ENCODE measurements at regions of chr12 and their contacts with region 1.

Region 1: GRCh38 chr12:6890789-6891645 is 13.6 kb upstream of the LRRC23 start:
- DNase-seq: peak; percentile 88
- ATAC-seq: peak; percentile 96
- H3K4me3 ChIP-seq: peak overlapping the region; percentile 50 to 79 (median 65)
- H3K27ac ChIP-seq: peak overlapping the region; percentile 94
- H3K4me1 ChIP-seq: peaks cover 52% of the 10 kb centered on the region
- H3K27me3 ChIP-seq: no peaks in the 10 kb centered on the region; a peak in 1 of 5 replicates
- CTCF ChIP-seq: peak; percentile 87
- EP300 ChIP-seq: peak in 1 of 2 experiments; percentile 56; a peak in 3 of 4 replicates
- POLR2A ChIP-seq: peak; percentile 73 to 78
- RAD21 ChIP-seq: peak; percentile 99

Region 2: DNA sequence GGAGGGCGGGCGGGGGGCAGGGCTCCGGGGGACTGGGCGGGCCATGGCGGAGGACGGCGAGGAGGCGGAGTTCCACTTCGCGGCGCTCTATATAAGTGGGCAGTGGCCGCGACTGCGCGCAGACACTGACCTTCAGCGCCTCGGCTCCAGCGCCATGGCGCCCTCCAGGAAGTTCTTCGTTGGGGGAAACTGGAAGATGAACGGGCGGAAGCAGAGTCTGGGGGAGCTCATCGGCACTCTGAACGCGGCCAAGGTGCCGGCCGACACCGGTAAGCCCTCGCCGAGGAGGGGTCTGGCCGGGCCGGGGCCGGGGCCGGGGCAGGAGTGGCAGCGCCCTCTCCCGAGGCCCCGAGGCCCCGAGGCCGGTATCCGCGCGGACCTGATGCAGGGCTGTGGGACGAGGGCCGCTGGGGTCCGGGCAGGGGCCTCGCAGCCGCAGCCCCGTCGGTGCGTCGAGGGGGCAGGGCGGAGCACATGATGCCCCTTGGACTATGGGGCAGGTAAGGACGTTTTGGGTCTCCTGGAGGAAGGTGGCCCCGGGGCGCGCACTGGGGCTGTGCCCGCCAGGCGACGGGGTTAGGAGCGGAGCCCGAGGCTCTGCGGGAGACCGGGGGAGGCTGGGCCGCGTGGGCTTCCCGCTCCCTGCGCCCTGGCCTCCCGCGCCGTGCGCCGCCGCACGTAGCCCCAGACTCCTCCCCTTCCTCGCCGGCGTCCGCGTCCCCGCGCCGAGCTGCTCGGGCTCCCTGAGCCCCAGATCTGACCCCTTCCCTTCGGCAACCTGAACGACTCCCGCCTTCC is 23.4 kb before region 1 on chr12 and contains the start of gene TPI1:
- CTCF ChIA-PET with region 1: interaction called, 24 read pairs
- POLR2A ChIA-PET with region 1: interaction called, 73 read pairs
- in situ Hi-C with region 1: no loop called
- intact Hi-C with region 1: loop called (anchors 1 kb)
- DNase-seq: peak; percentile 39
- ATAC-seq: peak; percentile 73
- H3K4me3 ChIP-seq: peak within 1 kb of the TSS; percentile 88 to 96 (median 92)
- H3K27ac ChIP-seq: peak within 1 kb of the TSS; percentile 87
- H3K4me1 ChIP-seq: peaks cover 45% of the 10 kb centered on the region
- H3K27me3 ChIP-seq: no peaks in the 10 kb centered on the region; a peak in 1 of 5 replicates
- CTCF ChIP-seq: peak; percentile 5; the same call in 1 of the 2 replicates
- EP300 ChIP-seq: no peak
- POLR2A ChIP-seq: peak in 1 of 2 experiments; percentile 98; a peak in 2 of 4 replicates
- RAD21 ChIP-seq: peak; percentile 59
- total RNA-seq, gene TPI1: 945 and 1,237 TPM in 2 replicates

Region 3: GRCh38 chr12:6904280-6905278 is 13.6 kb after region 1 on chr12 and contains the start of gene LRRC23:
- CTCF ChIA-PET with region 1: no interaction called
- POLR2A ChIA-PET with region 1: interaction called, 12 read pairs
- in situ Hi-C with region 1: no loop called
- intact Hi-C with region 1: no loop called
- DNase-seq: peak; percentile 90
- ATAC-seq: peak; percentile 89
- H3K4me3 ChIP-seq: peak within 1 kb of the TSS; percentile 78 to 88 (median 83)
- H3K27ac ChIP-seq: peak within 1 kb of the TSS; percentile 69
- H3K4me1 ChIP-seq: peaks cover 60% of the 10 kb centered on the region
- H3K27me3 ChIP-seq: no peaks in the 10 kb centered on the region
- CTCF ChIP-seq: no peak
- EP300 ChIP-seq: peak in 1 of 2 experiments; percentile 63; a peak in 1 of 4 replicates
- POLR2A ChIP-seq: peak in 1 of 2 experiments; percentile 64; a peak in 2 of 4 replicates
- RAD21 ChIP-seq: no peak
- total RNA-seq, gene LRRC23: 6.0 and 6.7 TPM in 2 replicates

Region 4: GRCh38 chr12:6914246-6914946 is 23.4 kb after region 1 on chr12 and contains the start of gene ENO2:
- CTCF ChIA-PET with region 1: no interaction called
- POLR2A ChIA-PET with region 1: interaction called, 12 read pairs
- in situ Hi-C with region 1: no loop called
- intact Hi-C with region 1: no loop called
- DNase-seq: peak; percentile 44
- ATAC-seq: peak; percentile 89
- H3K4me3 ChIP-seq: peak within 1 kb of the TSS; percentile 63 to 90 (median 77)
- H3K27ac ChIP-seq: peak within 1 kb of the TSS; percentile 84
- H3K4me1 ChIP-seq: peaks cover 48% of the 10 kb centered on the region
- H3K27me3 ChIP-seq: no peaks in the 10 kb centered on the region
- CTCF ChIP-seq: no peak
- EP300 ChIP-seq: no peak
- POLR2A ChIP-seq: peak in 1 of 2 experiments; percentile 68; a peak in 2 of 4 replicates
- RAD21 ChIP-seq: no peak
- total RNA-seq, gene ENO2: 15.9 and 19.3 TPM in 2 replicates

Region 5: GRCh38 chr12:6927379-6928024 is 36.5 kb after region 1 on chr12 and contains the start of gene ATN1:
- CTCF ChIA-PET with region 1: no interaction called
- POLR2A ChIA-PET with region 1: interaction called, 11 read pairs
- in situ Hi-C with region 1: no loop called
- intact Hi-C with region 1: no loop called
- DNase-seq: no peak
- ATAC-seq: peak; percentile 18
- H3K4me3 ChIP-seq: peak within 1 kb of the TSS; percentile 82 to 93 (median 90)
- H3K27ac ChIP-seq: peak within 1 kb of the TSS; percentile 64
- H3K4me1 ChIP-seq: peaks cover 66% of the 10 kb centered on the region
- H3K27me3 ChIP-seq: no peaks in the 10 kb centered on the region; a peak in 1 of 5 replicates
- CTCF ChIP-seq: no peak
- EP300 ChIP-seq: no peak
- POLR2A ChIP-seq: peak in 1 of 2 experiments; percentile 53; a peak in 1 of 4 replicates
- RAD21 ChIP-seq: no peak
- total RNA-seq, gene ATN1: 2.1 TPM in 2 replicates

Region 6: DNA sequence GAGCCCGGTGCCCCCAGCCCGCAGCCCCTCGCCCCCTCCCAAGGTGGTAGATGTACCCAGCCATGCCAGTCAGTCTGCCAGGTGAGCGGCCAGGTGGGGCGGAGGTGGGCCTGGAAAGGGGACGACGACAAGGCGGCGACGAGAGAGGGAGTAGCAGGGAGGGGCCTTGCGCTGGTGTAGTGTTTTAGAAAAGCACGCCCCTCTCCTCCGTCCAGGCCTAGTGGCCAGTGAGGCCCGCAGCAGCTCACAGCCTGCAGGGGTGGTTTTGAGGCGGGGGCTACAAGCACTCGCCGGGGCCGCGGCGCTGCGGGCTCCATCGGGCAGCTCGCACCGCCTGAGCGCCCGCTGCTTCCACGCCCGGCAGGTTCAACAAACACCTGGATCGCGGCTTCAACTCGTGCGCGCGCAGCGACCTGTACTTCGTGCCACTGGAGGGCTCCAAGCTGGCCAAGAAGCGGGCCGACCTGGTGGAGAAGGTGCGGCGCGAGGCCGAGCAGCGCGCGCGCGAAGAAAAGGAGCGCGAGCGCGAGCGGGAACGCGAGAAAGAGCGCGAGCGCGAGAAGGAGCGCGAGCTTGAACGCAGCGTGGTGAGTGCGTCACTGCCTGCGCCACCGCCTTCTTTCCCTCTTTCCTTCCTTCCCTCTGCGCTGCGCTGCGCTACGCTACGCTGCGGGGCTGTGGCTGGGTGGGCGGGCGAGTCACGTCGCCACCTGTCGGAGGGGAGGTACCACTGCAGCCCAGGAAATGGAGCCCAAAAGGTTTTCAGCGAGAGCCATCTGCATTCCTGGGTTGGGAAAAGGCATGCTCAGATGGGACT is 46.7 kb after region 1 on chr12:
- CTCF ChIA-PET with region 1: no interaction called
- POLR2A ChIA-PET with region 1: interaction called, 10 read pairs
- in situ Hi-C with region 1: no loop called
- intact Hi-C with region 1: no loop called
- DNase-seq: peak; percentile 91
- ATAC-seq: peak; percentile 93
- H3K4me3 ChIP-seq: peak overlapping the region; percentile 49 to 78 (median 70); a peak in 5 of 6 replicates
- H3K27ac ChIP-seq: peak overlapping the region; percentile 90
- H3K4me1 ChIP-seq: peaks cover 26% of the 10 kb centered on the region
- H3K27me3 ChIP-seq: no peaks in the 10 kb centered on the region
- CTCF ChIP-seq: peak; percentile 99
- EP300 ChIP-seq: 0 out of 4 replicates have a peak, but pooled peaks of 1 of the 2 experiments have one; percentile 10
- POLR2A ChIP-seq: peak in 1 of 2 experiments; percentile 63; a peak in 2 of 4 replicates
- RAD21 ChIP-seq: peak; percentile 66; the same call in 1 of the 2 replicates